Colonic mucosa (tissue), 4 donors: ENCODE measurements at regions of chr17 and their contacts with region 1.

Region 1: DNA sequence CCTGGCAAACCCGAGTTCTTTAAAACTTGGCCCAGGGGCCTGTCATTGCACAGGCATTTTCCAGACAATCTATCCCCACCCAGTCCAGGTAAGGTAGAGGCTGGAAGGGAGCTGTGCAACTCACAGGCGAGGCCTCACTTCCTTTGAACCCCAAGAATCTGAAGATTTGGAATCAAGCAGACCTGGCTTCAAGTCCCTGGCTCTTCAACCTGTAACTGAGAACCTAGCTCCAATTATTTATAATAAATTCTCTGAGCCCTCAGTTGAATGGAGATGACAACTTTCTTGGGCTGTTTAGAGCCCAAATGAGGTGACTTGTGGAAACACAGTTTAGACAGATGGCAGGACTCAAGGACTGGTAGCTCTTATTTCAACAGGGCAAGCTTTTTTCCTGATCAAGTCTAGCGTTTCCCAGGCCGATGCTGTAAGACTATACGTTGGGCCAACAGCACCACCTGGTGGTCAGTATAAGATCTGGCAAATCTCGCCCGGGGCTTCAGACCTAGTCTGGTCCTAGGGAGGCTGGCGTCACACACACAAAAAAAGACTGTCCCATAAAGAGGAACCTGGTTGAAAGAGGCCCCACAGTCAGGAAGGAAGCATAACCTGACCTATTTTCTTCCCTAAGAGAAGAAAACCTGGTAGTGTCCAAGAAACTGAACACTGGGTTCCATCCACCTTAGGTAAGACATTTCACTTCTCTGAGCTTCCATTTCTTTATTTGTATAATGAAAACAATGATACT is 117.9 kb downstream of the C17orf67 start:
- DNase-seq: peak; percentile 77
- H3K4me3 ChIP-seq: no peak overlapping the region
- H3K27ac ChIP-seq: no peak overlapping the region
- H3K4me1 ChIP-seq: no peaks in the 10 kb centered on the region
- H3K27me3 ChIP-seq: no peaks in the 10 kb centered on the region
- CTCF ChIP-seq: peak; percentile 75

Region 2: DNA sequence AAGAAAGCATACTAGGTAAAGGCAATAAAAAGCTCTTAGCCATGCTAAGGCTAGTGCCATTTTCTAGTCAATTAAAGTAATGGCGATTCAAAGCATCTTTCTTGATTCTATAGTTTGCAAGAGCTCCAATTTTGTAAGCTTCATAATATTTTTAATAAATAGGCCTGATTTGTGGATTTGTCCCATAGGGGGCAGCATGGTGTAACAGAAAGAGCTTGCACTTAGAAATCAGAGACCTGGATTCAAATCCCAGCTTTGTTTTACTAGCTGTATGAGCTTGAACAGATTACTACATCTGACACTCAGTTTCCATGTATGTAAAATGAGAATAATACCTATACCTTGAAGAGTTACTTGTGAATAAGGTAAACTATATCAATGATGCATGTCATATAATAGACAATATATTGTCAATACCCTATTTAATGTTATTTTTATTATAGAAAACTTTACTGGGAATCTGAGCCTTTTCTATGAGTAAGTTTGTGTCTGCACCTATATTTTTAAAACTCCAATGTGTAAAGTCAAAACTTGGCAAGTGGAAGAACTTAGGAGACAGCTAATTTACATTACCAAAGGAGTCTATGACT is 215.9 kb before region 1 on chr17:
- intact Hi-C with region 1: loop called (anchors 10 kb)
- DNase-seq: no peak
- H3K4me3 ChIP-seq: no peak overlapping the region
- H3K27ac ChIP-seq: no peak overlapping the region
- H3K4me1 ChIP-seq: no peaks in the 10 kb centered on the region
- H3K27me3 ChIP-seq: no peaks in the 10 kb centered on the region
- CTCF ChIP-seq: peak; percentile 34

Region 3: GRCh38 chr17:56808503-56808902 is 92.7 kb after region 1 on chr17:
- intact Hi-C with region 1: no loop called
- DNase-seq: no peak
- H3K4me3 ChIP-seq: no peak overlapping the region
- H3K27ac ChIP-seq: no peak overlapping the region
- H3K4me1 ChIP-seq: no peaks in the 10 kb centered on the region
- H3K27me3 ChIP-seq: no peaks in the 10 kb centered on the region
- CTCF ChIP-seq: no peak